OCI-LY7 (cell line): ENCODE measurements at regions of chr4 and their contacts with region 1.

Region 1: DNA sequence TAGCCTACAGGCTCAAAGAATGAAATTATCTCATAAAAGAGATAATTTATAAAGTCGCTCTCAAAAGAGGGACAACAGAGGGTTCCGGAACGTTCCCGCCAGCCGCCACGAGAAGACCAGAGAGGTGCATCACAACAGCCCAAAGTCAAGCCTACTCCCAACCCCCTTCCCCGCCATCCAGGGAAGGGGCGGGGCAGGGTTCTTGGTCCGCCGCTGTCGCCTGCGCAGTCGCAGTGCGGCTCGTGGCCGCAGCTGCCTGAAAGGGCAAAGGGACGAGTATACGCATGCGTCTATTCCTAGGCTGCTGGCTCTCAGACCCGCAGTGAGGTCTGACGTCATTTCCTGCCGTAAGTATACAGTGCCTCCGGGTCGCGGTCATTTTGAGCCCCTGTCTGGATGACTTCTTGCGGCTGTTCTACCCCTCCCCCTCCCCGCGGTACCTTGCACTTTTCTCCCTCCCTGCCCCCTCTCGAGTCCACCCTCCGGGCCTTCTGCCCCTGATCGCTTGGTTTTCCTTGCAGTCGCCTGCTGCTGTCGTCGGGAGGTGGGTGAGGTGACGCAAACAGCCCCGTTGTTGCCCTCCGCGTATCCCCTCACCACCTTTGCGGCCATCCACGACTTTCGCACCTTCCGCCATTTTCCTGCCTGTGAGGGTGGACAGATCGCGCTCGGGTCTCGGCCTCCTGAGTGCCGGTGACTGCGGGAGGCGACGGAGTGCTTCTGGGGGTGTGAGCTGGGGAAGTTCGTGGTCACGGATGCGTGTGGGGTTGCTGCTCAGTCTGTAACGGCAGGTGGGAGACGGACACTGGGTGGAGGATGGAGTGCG is at the start of gene OCIAD1:
- DNase-seq: peak; percentile 100
- H3K4me3 ChIP-seq: peak within 1 kb of the TSS; percentile 97
- H3K27ac ChIP-seq: peak within 1 kb of the TSS; percentile 86
- H3K4me1 ChIP-seq: peaks cover 22% of the 10 kb centered on the region
- CTCF ChIP-seq: no peak
- total RNA-seq, gene OCIAD1: 50.4 and 76.1 TPM in 2 replicates

Region 2: GRCh38 chr4:48813964-48814363 is 17.0 kb before region 1 on chr4:
- CTCF ChIA-PET with region 1: interaction called, 5 read pairs
- POLR2A ChIA-PET with region 1: interaction called, 15 read pairs
- intact Hi-C with region 1: loop called (anchors 1 kb)
- DNase-seq: peak; percentile 96
- H3K4me3 ChIP-seq: peak overlapping the region; percentile 36
- H3K27ac ChIP-seq: peak overlapping the region; percentile 86
- H3K4me1 ChIP-seq: peaks cover 51% of the 10 kb centered on the region
- CTCF ChIP-seq: no peak